ENCODE measurements at regions of chr7 and their contacts with region 1.

Region 1: DNA sequence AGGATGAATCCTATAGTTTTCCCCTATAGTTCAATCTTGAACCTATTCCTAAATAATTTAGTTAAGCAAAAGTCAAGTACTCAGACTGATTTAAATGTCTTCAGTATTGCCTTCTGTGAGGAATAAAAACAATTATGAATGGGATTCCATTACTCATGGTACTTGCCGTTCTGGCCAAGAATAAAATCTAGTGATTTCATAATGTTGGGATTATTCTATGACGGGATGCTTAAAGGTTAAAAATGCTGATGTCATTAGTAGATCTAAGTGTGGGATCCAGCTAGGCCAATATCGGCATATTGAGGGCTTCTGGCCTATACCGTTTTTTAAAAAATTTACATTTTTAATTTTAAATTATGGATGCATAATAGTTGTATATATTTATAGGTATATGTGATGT is 5.3 kb downstream of the BPGM start:
- DNase-seq: no peak
- H3K4me3 ChIP-seq: no peak overlapping the region
- H3K27ac ChIP-seq: no peak overlapping the region
- H3K4me1 ChIP-seq: peaks cover 0 to 16% (median 6%) of the 10 kb centered on the region in 4 donors
- H3K27me3 ChIP-seq: no peaks in the 10 kb centered on the region
- CTCF ChIP-seq: no peak
- EP300 ChIP-seq: no peak
- POLR2A ChIP-seq: no peak

Region 2: DNA sequence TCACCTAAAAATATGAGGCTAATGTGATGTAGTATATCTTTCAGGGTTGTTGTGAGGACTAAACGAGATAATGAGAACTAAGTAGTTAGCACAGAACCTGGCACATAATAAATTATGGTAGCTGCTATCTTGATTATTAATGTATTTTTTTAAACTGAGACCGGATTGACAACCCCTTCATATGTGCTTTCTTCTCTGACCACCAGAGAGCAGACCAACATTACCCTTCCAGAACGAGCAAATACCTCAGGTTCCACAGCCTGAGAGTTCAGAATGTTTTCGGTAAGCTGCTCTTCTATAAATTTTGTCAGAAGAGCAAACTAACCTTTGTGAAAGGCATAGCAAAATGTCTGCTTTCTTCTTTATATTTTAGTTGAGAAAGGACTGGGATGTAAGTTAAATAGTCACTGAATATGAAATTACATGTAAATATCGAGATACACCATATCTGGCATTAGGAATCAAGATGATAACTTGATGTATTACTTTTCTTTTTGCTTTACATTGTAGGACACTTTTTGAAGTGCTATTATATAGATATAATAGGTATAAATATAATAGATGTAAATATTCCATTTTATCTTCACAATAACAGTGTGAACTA is 19.0 kb before region 1 on chr7:
- intact Hi-C with region 1: loop called (anchors 2 kb)
- DNase-seq: no peak
- H3K4me3 ChIP-seq: no peak overlapping the region
- H3K27ac ChIP-seq: no peak overlapping the region
- H3K4me1 ChIP-seq: no peaks in the 10 kb centered on the region
- H3K27me3 ChIP-seq: peaks cover 0 to 3% (median 0%) of the 10 kb centered on the region in 3 donors
- CTCF ChIP-seq: peak in 1 of 4 experiments; percentile 15
- EP300 ChIP-seq: no peak
- POLR2A ChIP-seq: no peak